ENCODE measurements at regions of chr6 and their contacts with region 1.

Region 1: DNA sequence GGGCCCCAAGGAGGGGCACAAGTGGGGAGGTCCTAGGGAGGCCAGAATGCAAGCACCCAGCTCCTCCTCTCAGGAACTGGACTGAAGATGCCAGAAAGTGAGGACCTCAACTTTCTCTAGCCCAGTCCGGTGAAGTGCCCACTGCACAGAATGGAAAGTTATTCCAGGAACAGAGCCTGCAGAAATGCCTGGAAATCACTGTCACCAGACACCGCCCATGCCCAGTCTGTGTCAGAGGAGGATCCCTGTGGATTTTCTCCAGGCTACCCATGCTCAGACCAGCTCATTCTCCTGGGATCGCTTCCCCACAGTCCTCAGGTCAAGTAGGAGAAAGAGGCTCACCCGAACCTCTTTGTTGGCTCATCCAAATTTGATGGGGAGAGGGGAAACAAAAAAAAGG is 6.5 kb downstream of the PRPH2 start:
- DNase-seq: no peak
- ATAC-seq: no peak
- H3K4me3 ChIP-seq: no peak overlapping the region
- H3K4me3 Mint-ChIP-seq: no peak overlapping the region
- H3K27ac ChIP-seq: no peak overlapping the region
- H3K27ac Mint-ChIP-seq: no peak overlapping the region
- H3K4me1 ChIP-seq: no peaks in the 10 kb centered on the region
- H3K4me1 Mint-ChIP-seq: peaks cover 0 to under 1% (median 0%) of the 10 kb centered on the region in 3 donors
- H3K27me3 ChIP-seq: peaks cover 0 to 7% of the 10 kb centered on the region in 2 experiments
- H3K27me3 Mint-ChIP-seq: no peaks in the 10 kb centered on the region

Region 2: GRCh38 chr6:42729731-42730130 is 13.9 kb after region 1 on chr6:
- CTCF ChIA-PET with region 1: no interaction called
- POLR2A ChIA-PET with region 1: no interaction called
- DNase-seq: no peak
- ATAC-seq: no peak
- H3K4me3 ChIP-seq: no peak overlapping the region
- H3K4me3 Mint-ChIP-seq: no peak overlapping the region
- H3K27ac ChIP-seq: no peak overlapping the region
- H3K27ac Mint-ChIP-seq: peak overlapping the region in 1 of 2 donors; percentile 48
- H3K4me1 ChIP-seq: peaks cover 0 to 17% of the 10 kb centered on the region in 2 experiments
- H3K4me1 Mint-ChIP-seq: peaks cover 20 to 23% (median 21%) of the 10 kb centered on the region in 3 donors
- H3K27me3 ChIP-seq: no peaks in the 10 kb centered on the region
- H3K27me3 Mint-ChIP-seq: no peaks in the 10 kb centered on the region

Region 3: DNA sequence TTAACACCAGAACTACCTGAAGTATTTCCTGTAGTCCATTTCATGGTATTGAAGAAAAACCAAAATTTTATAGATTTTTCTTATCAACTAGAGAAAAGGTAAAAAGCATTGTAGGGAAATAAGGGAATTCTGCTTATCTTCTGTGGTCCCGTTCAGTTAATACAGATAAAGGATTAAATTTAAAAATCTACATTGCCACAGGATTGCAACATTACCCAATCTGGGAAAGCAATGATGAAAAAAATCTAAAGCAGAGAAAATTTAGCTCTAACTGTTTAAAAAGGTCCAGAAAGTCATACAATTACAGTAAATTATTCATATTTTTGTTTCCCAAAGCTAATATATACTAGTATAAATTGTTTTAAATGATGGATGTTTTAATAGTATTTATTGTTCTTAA is 878.1 kb after region 1 on chr6:
- CTCF ChIA-PET with region 1: no interaction called
- POLR2A ChIA-PET with region 1: interaction called in 1 of 2 experiments, 10 read pairs
- DNase-seq: no peak
- ATAC-seq: no peak
- H3K4me3 ChIP-seq: no peak overlapping the region
- H3K4me3 Mint-ChIP-seq: no peak overlapping the region
- H3K27ac ChIP-seq: no peak overlapping the region
- H3K27ac Mint-ChIP-seq: no peak overlapping the region
- H3K4me1 ChIP-seq: no peaks in the 10 kb centered on the region
- H3K4me1 Mint-ChIP-seq: no peaks in the 10 kb centered on the region
- H3K27me3 ChIP-seq: no peaks in the 10 kb centered on the region
- H3K27me3 Mint-ChIP-seq: no peaks in the 10 kb centered on the region